ENCODE measurements at regions of chr3 and their contacts with region 1.

Region 1: GRCh38 chr3:13452490-13453335 is 27.4 kb upstream of the HDAC11 start:
- DNase-seq: peak in 8 of 9 donors; percentile 30 to 70 (median 61)
- ATAC-seq: peak; percentile 55
- H3K4me3 ChIP-seq: peak overlapping the region; percentile 94
- H3K4me3 Mint-ChIP-seq: peak overlapping the region; percentile 79 to 99 (median 97)
- H3K27ac ChIP-seq: peak overlapping the region; percentile 74
- H3K27ac Mint-ChIP-seq: peak overlapping the region in 7 of 9 donors; percentile 49 to 99 (median 97)
- H3K4me1 ChIP-seq: peaks cover 13 to 15% of the 10 kb centered on the region in 2 donors
- H3K4me1 Mint-ChIP-seq: peaks cover 0 to 33% (median 16%) of the 10 kb centered on the region in 7 donors
- H3K27me3 ChIP-seq: no peaks in the 10 kb centered on the region
- H3K27me3 Mint-ChIP-seq: no peaks in the 10 kb centered on the region

Region 2: DNA sequence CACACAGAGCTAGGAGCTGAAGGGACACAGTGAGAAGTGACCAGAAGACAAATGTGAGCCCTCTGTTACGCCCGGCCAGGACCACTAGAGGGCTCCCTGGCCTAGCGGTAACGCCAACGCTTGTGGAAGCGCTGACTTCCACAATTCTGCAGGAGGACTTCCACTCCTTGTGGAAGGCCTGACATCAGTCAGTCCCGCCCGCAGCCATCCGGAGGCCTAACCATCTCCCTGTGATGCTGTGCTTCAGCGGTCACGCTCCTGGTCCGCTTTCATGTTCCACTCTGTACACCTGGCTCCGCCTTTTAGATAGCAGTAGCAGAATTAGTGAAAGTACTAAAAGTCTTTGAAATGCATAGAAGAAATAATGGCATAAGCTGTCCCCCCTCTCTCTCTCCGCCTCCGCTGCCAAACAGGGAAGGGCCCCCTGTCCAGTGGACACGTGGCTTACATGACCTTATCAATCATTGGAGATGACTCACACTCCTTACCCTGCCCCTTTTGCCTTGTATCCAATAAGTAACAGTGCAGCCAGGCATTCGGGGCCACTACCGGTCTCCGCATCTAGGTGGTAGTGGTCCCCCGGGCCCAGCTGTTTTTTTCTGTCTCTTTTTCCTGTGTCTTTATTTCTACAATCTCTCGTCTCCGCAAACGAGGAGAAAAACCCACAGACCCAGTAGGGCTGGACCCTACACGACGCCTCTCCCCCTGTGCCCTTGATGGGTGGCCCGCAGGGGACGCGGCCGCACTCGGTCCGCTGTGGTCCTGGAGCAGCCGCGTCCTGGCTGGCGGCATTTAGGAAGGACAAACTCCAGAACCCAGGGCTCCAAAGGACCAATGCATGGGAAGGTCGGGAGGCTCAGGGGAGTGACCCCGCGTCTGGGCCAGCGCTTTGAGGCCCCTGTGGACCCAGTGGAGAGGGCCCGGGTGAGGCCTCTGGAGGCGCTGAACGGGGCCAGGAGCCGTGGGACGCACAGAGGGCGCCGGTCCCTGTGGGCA is 584.4 kb before region 1 on chr3:
- CTCF ChIA-PET with region 1: no interaction called
- POLR2A ChIA-PET with region 1: no interaction called
- intact Hi-C with region 1: loop called in 1 of 2 experiments (anchors 1 kb)
- DNase-seq: peak; percentile 32 to 68 (median 50)
- ATAC-seq: peak; percentile 87
- H3K4me3 ChIP-seq: peak overlapping the region; percentile 60
- H3K4me3 Mint-ChIP-seq: peak overlapping the region; percentile 79 to 92 (median 86)
- H3K27ac ChIP-seq: no peak overlapping the region
- H3K27ac Mint-ChIP-seq: peak overlapping the region in 2 of 9 donors; percentile 4 to 53
- H3K4me1 ChIP-seq: no peaks in the 10 kb centered on the region
- H3K4me1 Mint-ChIP-seq: peaks cover 0 to 14% (median 10%) of the 10 kb centered on the region in 7 donors
- H3K27me3 ChIP-seq: peaks cover 0 to 5% of the 10 kb centered on the region in 2 donors
- H3K27me3 Mint-ChIP-seq: peaks cover 9 to 35% (median 14%) of the 10 kb centered on the region in 5 donors

Region 3: GRCh38 chr3:13091898-13092611 is 360.7 kb before region 1 on chr3:
- CTCF ChIA-PET with region 1: interaction called, 26 read pairs
- POLR2A ChIA-PET with region 1: no interaction called
- intact Hi-C with region 1: loop called in 1 of 2 experiments (anchors 1 kb)
- DNase-seq: peak; percentile 51 to 82 (median 71)
- ATAC-seq: peak; percentile 88
- H3K4me3 ChIP-seq: no peak overlapping the region
- H3K4me3 Mint-ChIP-seq: no peak overlapping the region
- H3K27ac ChIP-seq: no peak overlapping the region
- H3K27ac Mint-ChIP-seq: peak overlapping the region in 1 of 9 donors; percentile 36
- H3K4me1 ChIP-seq: no peaks in the 10 kb centered on the region
- H3K4me1 Mint-ChIP-seq: peaks cover 0 to 14% (median 4%) of the 10 kb centered on the region in 7 donors
- H3K27me3 ChIP-seq: no peaks in the 10 kb centered on the region
- H3K27me3 Mint-ChIP-seq: peaks cover 0 to 17% (median 12%) of the 10 kb centered on the region in 5 donors

Region 4: GRCh38 chr3:13346481-13347389 is 106.0 kb before region 1 on chr3:
- CTCF ChIA-PET with region 1: interaction called, 147 read pairs
- POLR2A ChIA-PET with region 1: interaction called, 100 read pairs
- intact Hi-C with region 1: loop called (anchors 1 kb)
- DNase-seq: peak; percentile 29 to 89 (median 86)
- ATAC-seq: peak; percentile 87
- H3K4me3 ChIP-seq: peak overlapping the region; percentile 33
- H3K4me3 Mint-ChIP-seq: peak overlapping the region; percentile 37 to 84 (median 71)
- H3K27ac ChIP-seq: peak overlapping the region; percentile 68
- H3K27ac Mint-ChIP-seq: peak overlapping the region; percentile 76 to 96 (median 91)
- H3K4me1 ChIP-seq: peaks cover 19 to 44% of the 10 kb centered on the region in 2 donors
- H3K4me1 Mint-ChIP-seq: peaks cover 42 to 64% (median 57%) of the 10 kb centered on the region in 7 donors
- H3K27me3 ChIP-seq: no peaks in the 10 kb centered on the region
- H3K27me3 Mint-ChIP-seq: no peaks in the 10 kb centered on the region

Region 5: GRCh38 chr3:13414040-13414729 is 38.5 kb before region 1 on chr3:
- CTCF ChIA-PET with region 1: interaction called, 102 read pairs
- POLR2A ChIA-PET with region 1: interaction called, 90 read pairs
- intact Hi-C with region 1: loop called (anchors 1 kb)
- DNase-seq: peak; percentile 52 to 66 (median 60)
- ATAC-seq: peak; percentile 95
- H3K4me3 ChIP-seq: peak overlapping the region; percentile 40
- H3K4me3 Mint-ChIP-seq: peak overlapping the region; percentile 77 to 100 (median 86)
- H3K27ac ChIP-seq: peak overlapping the region; percentile 96
- H3K27ac Mint-ChIP-seq: peak overlapping the region; percentile 82 to 97 (median 93)
- H3K4me1 ChIP-seq: peaks cover 53 to 56% of the 10 kb centered on the region in 2 donors
- H3K4me1 Mint-ChIP-seq: peaks cover 37 to 78% (median 61%) of the 10 kb centered on the region in 7 donors
- H3K27me3 ChIP-seq: no peaks in the 10 kb centered on the region
- H3K27me3 Mint-ChIP-seq: no peaks in the 10 kb centered on the region

Region 6: DNA sequence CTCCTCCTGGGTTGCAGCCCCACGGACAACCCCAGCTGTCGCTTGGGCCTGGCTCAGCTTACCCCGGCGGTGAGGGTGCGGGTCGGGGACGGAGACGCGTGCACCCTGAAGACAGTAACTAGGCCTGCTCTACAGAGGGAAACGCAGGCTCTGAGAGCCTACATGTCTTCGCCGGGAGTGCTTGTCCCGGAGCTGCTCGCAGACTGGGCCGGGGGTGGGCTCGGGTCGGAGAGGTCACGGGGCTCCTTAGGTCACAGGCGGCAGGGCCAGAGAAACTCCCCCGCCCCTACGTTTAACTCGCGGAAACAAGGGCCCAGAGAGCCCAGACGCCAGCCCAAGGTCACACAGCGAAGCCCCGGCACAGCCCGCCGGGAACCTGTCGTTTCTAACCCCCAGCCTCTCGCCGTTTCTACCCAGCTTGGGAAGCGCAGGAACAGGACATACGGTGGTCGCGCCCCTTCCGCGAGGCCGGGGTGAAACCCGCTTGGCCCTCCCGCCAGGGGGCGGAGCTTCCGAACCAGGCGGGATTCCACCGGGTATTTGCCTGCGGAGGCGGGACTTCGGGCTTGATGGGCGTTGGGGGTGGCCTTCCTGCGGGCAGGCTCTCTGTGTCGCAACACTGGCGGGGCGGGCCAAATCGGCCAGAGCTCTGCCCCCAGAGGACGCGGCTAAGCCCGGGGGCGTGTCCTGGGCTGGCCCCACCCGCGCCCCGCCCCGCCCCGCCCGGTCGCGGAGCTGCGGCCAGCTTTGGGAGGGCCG is 27.0 kb after region 1 on chr3 and contains the start of gene HDAC11:
- CTCF ChIA-PET with region 1: interaction called, 6 read pairs
- POLR2A ChIA-PET with region 1: interaction called, 17 read pairs
- intact Hi-C with region 1: loop called (anchors 1 kb)
- DNase-seq: peak; percentile 93 to 98 (median 95)
- ATAC-seq: peak; percentile 98
- H3K4me3 ChIP-seq: peak within 1 kb of the TSS; percentile 97
- H3K4me3 Mint-ChIP-seq: peak within 1 kb of the TSS; percentile 90 to 97 (median 94)
- H3K27ac ChIP-seq: peak within 1 kb of the TSS; percentile 98
- H3K27ac Mint-ChIP-seq: peak within 1 kb of the TSS; percentile 82 to 97 (median 94)
- H3K4me1 ChIP-seq: peaks cover 8 to 15% of the 10 kb centered on the region in 2 donors
- H3K4me1 Mint-ChIP-seq: peaks cover 4 to 22% (median 15%) of the 10 kb centered on the region in 7 donors
- H3K27me3 ChIP-seq: no peaks in the 10 kb centered on the region
- H3K27me3 Mint-ChIP-seq: peaks cover 0 to 13% (median 0%) of the 10 kb centered on the region in 5 donors
- total RNA-seq, gene HDAC11: 1.2 to 8.0 (median 7.3) TPM

Region 7: GRCh38 chr3:14744556-14744955 is 1291.8 kb after region 1 on chr3:
- CTCF ChIA-PET with region 1: no interaction called
- POLR2A ChIA-PET with region 1: no interaction called
- intact Hi-C with region 1: no loop called
- DNase-seq: no peak
- ATAC-seq: no peak
- H3K4me3 ChIP-seq: no peak overlapping the region
- H3K4me3 Mint-ChIP-seq: no peak overlapping the region
- H3K27ac ChIP-seq: no peak overlapping the region
- H3K27ac Mint-ChIP-seq: no peak overlapping the region
- H3K4me1 ChIP-seq: no peaks in the 10 kb centered on the region
- H3K4me1 Mint-ChIP-seq: no peaks in the 10 kb centered on the region
- H3K27me3 ChIP-seq: no peaks in the 10 kb centered on the region
- H3K27me3 Mint-ChIP-seq: peaks cover 11 to 40% (median 21%) of the 10 kb centered on the region in 5 donors